Activated naive CD8-positive, alpha-beta T cell treated with anti-CD3 and anti-CD28 coated beads, Interleukin-2, amount 10 ng/mL, durations not matched to agents 7 days and 5 days (primary cell): ENCODE measurements at regions of chr10 and their contacts with region 1.

Region 1: GRCh38 chr10:17643755-17644484 is at the start of gene STAM:
- DNase-seq: peak; percentile 94
- ATAC-seq: peak; percentile 86
- H3K4me3 Mint-ChIP-seq: peak within 1 kb of the TSS; percentile 95
- H3K27ac Mint-ChIP-seq: peak within 1 kb of the TSS; percentile 99
- H3K4me1 Mint-ChIP-seq: peaks cover 44% of the 10 kb centered on the region
- H3K27me3 Mint-ChIP-seq: no peaks in the 10 kb centered on the region
- total RNA-seq, gene STAM: 20.0 to 23.1 TPM

Region 2: GRCh38 chr10:17617031-17617911 is 26.6 kb before region 1 on chr10 and contains the start of gene HACD1:
- POLR2A ChIA-PET with region 1: interaction called, 10 read pairs
- DNase-seq: peak; percentile 68
- ATAC-seq: peak; percentile 77
- H3K4me3 Mint-ChIP-seq: peak within 1 kb of the TSS; percentile 87
- H3K27ac Mint-ChIP-seq: peak within 1 kb of the TSS; percentile 16
- H3K4me1 Mint-ChIP-seq: peaks cover 6% of the 10 kb centered on the region
- H3K27me3 Mint-ChIP-seq: peaks cover 24% of the 10 kb centered on the region
- total RNA-seq, gene HACD1: 0.61 to 0.88 TPM